Activated CD4-positive, alpha-beta T cell treated with anti-CD3 and anti-CD28 coated beads for 36 hours (primary cell): ENCODE measurements at regions of chr5 and their contacts with region 1.

Region 1: GRCh38 chr5:116947691-116948528 is 373.3 kb upstream of the SEMA6A start:
- DNase-seq: peak; percentile 79
- ATAC-seq: peak; percentile 87
- H3K4me3 Mint-ChIP-seq: no peak overlapping the region
- H3K27ac Mint-ChIP-seq: no peak overlapping the region
- H3K4me1 Mint-ChIP-seq: no peaks in the 10 kb centered on the region
- H3K27me3 Mint-ChIP-seq: no peaks in the 10 kb centered on the region

Region 2: DNA sequence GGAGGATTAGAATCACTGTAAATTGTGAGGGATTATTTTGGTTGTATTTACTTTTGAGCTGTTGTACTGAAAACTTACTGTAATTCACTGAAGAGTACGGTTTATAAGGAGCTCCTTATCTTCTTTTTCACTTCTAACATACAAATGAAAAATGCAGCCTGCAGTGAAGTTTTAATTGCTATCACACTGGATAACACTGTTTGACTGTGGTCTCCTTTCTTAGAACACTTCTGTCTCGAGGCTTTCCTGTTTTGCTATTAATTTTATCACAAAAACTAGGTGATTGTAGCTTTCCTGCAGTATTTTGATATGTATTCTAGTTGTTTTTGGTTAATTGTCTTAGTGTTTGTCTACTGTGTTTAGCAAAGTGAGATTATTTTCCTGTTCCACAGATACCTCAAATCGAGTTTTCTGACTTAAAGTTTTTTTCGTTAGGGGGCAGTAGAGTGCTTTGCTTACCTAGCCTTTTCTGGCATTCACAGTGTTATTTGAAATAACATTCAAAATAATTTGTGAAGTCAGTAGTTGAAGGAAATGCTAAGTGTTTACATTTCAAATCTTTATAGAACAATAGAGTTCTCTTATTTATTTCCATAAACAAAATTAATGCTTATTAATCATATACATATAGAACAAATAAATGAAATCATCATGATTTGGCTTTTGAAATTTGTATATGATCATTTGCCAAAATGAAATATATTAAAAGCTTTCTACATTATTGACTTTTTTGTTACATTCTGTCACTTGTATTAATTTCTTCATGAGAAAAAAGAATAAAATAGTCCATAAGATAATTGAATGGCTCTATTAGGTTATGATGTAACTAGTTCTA is 810.1 kb before region 1 on chr5:
- CTCF ChIA-PET with region 1: interaction called, 10 read pairs
- POLR2A ChIA-PET with region 1: no interaction called
- intact Hi-C with region 1: loop called in 1 of 2 experiments (anchors 1 kb)
- DNase-seq: no peak
- ATAC-seq: no peak
- H3K4me3 Mint-ChIP-seq: no peak overlapping the region
- H3K27ac Mint-ChIP-seq: no peak overlapping the region
- H3K4me1 Mint-ChIP-seq: peaks cover 18% of the 10 kb centered on the region
- H3K27me3 Mint-ChIP-seq: no peaks in the 10 kb centered on the region

Region 3: DNA sequence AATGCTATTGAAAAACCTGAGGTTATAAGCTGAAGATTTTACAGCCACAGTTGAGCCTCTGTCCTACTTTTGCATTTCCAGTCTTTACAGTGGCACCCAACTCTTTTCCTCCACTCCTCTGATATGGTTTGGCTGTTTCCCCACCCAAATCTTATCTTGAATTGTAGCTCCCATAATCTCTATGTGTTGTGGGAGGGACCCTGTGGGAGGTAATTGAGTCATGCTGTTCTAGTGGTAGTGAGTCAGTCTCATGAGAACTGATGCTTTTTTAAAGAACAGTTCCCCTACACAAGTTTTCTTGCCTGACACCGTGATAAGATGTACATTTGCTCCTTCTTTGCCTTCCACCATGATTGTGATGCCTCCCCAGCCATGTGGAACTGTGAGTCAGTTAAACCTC is 272.8 kb after region 1 on chr5:
- CTCF ChIA-PET with region 1: no interaction called
- POLR2A ChIA-PET with region 1: no interaction called
- intact Hi-C with region 1: no loop called
- DNase-seq: no peak
- ATAC-seq: no peak
- H3K4me3 Mint-ChIP-seq: no peak overlapping the region
- H3K27ac Mint-ChIP-seq: no peak overlapping the region
- H3K4me1 Mint-ChIP-seq: no peaks in the 10 kb centered on the region
- H3K27me3 Mint-ChIP-seq: no peaks in the 10 kb centered on the region